Esophagus muscularis mucosa (tissue), 4 donors: ENCODE measurements at regions of chr10 and their contacts with region 1.

Region 1: GRCh38 chr10:103888113-103888841 is 29.7 kb downstream of the STN1 start:
- DNase-seq: no peak
- H3K4me3 ChIP-seq: no peak overlapping the region
- H3K27ac ChIP-seq: peak overlapping the region; percentile 60 to 82 (median 74)
- H3K4me1 ChIP-seq: peaks cover 27 to 50% (median 37%) of the 10 kb centered on the region in 4 donors
- H3K27me3 ChIP-seq: no peaks in the 10 kb centered on the region
- CTCF ChIP-seq: peak; percentile 85 to 87 (median 87)
- EP300 ChIP-seq: no peak
- POLR2A ChIP-seq: no peak

Region 2: DNA sequence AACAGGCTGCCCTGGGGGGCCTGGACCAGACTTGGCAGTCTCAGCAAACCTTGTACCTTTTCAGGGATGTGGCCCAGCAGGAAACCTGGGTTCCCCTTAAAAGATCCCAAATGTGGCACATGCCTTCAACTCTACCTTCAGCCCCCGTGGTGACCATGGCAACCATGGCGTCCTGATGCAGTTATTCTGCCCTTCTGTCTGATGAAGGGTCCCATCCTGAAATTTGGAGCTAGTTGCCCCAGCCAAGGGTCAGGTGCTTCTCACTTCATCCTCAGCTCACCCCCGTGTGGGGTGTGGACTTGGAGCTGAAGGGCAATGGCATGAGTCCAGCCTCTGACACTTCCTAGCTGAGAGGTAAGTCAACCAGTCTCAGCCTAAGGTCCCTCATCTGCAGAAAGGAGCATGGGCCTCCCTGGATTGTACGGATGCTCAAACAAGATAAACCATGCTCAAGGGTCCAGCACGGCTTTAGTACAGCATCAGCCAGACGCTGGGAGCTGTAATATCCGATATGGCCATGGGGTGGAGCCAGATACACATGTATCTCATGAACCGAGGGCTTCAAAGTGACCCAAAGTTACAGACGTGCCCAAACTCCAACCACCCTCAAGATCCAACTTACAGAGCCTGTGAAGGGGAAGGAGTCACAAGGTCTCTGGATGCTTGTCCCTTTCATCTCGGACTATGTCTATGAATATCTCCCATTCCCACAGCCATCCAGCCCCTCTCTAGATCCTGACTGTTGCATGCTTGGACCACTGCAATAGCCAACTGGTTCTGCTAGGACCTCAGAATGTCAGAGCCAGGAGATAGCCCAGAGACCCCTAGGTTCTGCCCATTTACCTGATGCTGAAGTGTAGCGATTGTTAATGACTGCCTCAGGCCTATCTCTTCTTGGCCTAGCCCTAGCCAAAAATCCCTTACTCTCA is 175.4 kb before region 1 on chr10:
- intact Hi-C with region 1: loop called (anchors 5 kb)
- DNase-seq: peak; percentile 97
- H3K4me3 ChIP-seq: no peak overlapping the region
- H3K27ac ChIP-seq: no peak overlapping the region
- H3K4me1 ChIP-seq: peaks cover 0 to 23% (median 11%) of the 10 kb centered on the region in 4 donors
- H3K27me3 ChIP-seq: no peaks in the 10 kb centered on the region
- CTCF ChIP-seq: peak; percentile 95 to 98 (median 97)
- EP300 ChIP-seq: no peak
- POLR2A ChIP-seq: no peak

Region 3: GRCh38 chr10:103966671-103967447 is 78.6 kb after region 1 on chr10 and contains the start of gene SLK:
- intact Hi-C with region 1: loop called (anchors 2 kb)
- DNase-seq: no peak
- H3K4me3 ChIP-seq: peak within 1 kb of the TSS; percentile 71 to 97 (median 87)
- H3K27ac ChIP-seq: peak within 1 kb of the TSS; percentile 98 to 99 (median 99)
- H3K4me1 ChIP-seq: peaks cover 15 to 44% (median 40%) of the 10 kb centered on the region in 4 donors
- H3K27me3 ChIP-seq: no peaks in the 10 kb centered on the region
- CTCF ChIP-seq: no peak
- EP300 ChIP-seq: no peak
- POLR2A ChIP-seq: peak; percentile 37
- total RNA-seq, gene SLK: 83.1 to 105 (median 102) TPM

Region 4: DNA sequence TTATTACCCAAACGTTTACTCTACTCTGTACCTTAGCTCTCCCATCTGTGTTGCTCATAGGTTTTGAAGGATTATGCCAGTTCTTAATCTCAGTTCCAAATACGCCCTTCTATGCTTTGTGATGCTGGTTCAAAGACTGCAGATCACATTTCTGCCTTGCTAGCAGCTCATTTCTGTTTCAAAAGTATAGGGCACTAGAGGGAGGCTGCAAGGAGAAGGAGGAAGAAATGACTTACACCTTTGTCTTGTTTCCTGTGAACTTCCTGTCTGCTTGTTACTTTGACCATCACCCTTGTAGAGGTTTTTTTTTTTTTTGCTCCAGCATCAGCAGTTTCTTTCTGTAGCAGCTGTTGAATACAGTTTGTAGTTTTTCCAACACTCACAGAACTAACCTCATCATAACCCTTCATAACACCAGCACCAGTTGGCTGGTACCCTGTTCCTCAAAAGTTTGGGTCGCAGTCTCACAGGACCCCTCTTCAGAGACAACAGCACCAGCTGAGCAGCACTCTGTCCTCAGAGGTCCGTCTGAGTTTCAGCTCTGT is 95.2 kb after region 1 on chr10:
- intact Hi-C with region 1: no loop called
- DNase-seq: no peak
- H3K4me3 ChIP-seq: no peak overlapping the region
- H3K27ac ChIP-seq: no peak overlapping the region
- H3K4me1 ChIP-seq: peaks cover 23 to 62% (median 54%) of the 10 kb centered on the region in 4 donors
- H3K27me3 ChIP-seq: no peaks in the 10 kb centered on the region
- CTCF ChIP-seq: no peak
- EP300 ChIP-seq: no peak
- POLR2A ChIP-seq: no peak

Region 5: GRCh38 chr10:104209575-104210198 is 321.4 kb after region 1 on chr10:
- intact Hi-C with region 1: loop called (anchors 5 kb)
- DNase-seq: no peak
- H3K4me3 ChIP-seq: no peak overlapping the region
- H3K27ac ChIP-seq: no peak overlapping the region
- H3K4me1 ChIP-seq: no peaks in the 10 kb centered on the region
- H3K27me3 ChIP-seq: no peaks in the 10 kb centered on the region
- CTCF ChIP-seq: peak; percentile 40 to 56 (median 56)
- EP300 ChIP-seq: no peak
- POLR2A ChIP-seq: no peak